Caco-2 (cell line): ENCODE measurements at regions of chr1 and their contacts with region 1.

Region 1: DNA sequence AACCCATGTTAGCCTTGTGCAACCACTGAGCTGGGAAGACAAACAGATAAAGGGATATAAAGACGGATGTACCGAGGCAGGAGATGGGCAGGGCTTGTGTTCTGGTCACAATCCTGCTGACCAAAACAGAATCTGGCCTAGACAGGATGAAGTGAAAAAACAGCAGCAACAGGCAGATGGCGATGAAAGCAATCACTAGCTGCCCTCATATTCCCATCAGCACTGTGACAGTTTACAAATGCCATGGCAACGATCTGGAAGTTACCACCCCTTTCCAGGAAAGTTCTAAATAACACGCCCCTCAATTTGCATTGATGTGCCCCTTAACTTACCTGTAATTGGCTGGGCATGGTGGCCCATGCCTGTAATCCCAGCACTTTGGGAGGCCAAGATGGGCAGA is 40.6 kb upstream of the CD46 start:
- DNase-seq: peak; percentile 53 to 61
- H3K4me3 ChIP-seq: no peak overlapping the region
- H3K4me3 Mint-ChIP-seq: no peak overlapping the region
- H3K27ac Mint-ChIP-seq: no peak overlapping the region
- H3K4me1 ChIP-seq: no peaks in the 10 kb centered on the region
- H3K4me1 Mint-ChIP-seq: no peaks in the 10 kb centered on the region
- H3K27me3 ChIP-seq: no peaks in the 10 kb centered on the region
- H3K27me3 Mint-ChIP-seq: no peaks in the 10 kb centered on the region
- CTCF ChIP-seq: peak in 1 of 2 experiments; percentile 25

Region 2: DNA sequence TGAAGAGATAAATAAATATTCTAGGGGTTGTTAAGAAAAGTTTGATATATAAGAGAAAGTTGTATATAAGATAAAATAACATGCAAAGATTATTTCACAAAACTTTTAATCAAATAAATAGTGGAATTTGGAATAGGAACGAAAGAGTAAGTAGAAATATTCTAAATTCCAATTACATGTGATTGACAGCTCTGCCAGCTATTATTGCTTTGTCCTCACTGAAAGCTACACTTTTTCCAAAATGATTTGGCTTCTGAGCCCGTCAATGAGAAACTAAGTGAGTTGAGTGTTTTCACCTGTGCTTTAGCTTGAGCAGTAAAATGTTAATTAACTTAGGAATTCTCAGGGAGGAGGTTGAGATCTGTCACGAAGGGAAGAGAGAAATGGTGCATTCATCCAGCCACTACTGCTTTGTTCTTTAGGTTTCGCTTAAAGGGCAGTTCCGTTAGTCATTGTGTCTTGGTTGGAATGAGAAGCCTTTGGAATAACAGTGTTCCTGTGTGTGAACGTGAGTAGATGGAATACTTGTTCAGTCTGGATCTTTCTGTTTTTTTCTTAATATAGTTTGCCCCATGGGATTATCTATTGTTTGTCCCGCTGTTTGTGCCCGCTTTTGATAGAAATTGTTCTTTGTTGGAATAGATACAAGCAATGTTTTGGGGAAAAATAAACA is 129.7 kb before region 1 on chr1:
- CTCF ChIA-PET with region 1: no interaction called
- POLR2A ChIA-PET with region 1: no interaction called
- intact Hi-C with region 1: no loop called
- DNase-seq: no peak
- H3K4me3 ChIP-seq: no peak overlapping the region
- H3K4me3 Mint-ChIP-seq: no peak overlapping the region
- H3K27ac Mint-ChIP-seq: no peak overlapping the region
- H3K4me1 ChIP-seq: no peaks in the 10 kb centered on the region
- H3K4me1 Mint-ChIP-seq: no peaks in the 10 kb centered on the region
- H3K27me3 ChIP-seq: no peaks in the 10 kb centered on the region
- H3K27me3 Mint-ChIP-seq: peaks cover 10% of the 10 kb centered on the region
- CTCF ChIP-seq: no peak

Region 3: DNA sequence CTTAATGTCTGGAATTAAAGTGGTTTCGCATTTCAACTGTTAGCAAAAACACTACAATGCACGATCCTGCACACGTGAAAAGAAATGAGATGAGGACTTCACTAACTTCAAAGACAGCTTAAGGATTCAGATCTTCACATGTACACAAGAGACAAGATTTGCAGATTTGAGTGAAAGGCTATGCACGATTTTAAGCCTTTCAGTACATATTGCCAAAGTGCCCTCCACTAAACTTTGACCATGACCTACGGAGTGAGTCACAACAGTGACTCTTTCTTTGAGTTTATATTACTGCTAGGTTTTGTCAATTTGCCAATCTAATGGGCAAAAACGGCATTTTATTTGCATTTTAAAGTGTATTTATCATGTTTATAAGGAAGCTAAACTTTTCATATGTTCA is 107.5 kb before region 1 on chr1:
- CTCF ChIA-PET with region 1: no interaction called
- POLR2A ChIA-PET with region 1: no interaction called
- intact Hi-C with region 1: no loop called
- DNase-seq: peak in 1 of 2 experiments; percentile 21
- H3K4me3 ChIP-seq: no peak overlapping the region
- H3K4me3 Mint-ChIP-seq: no peak overlapping the region
- H3K27ac Mint-ChIP-seq: no peak overlapping the region
- H3K4me1 ChIP-seq: 0 out of 2 replicates have a peak, but pooled peaks cover 4% of the 10 kb centered on the region
- H3K4me1 Mint-ChIP-seq: no peaks in the 10 kb centered on the region
- H3K27me3 ChIP-seq: no peaks in the 10 kb centered on the region
- H3K27me3 Mint-ChIP-seq: peaks cover 15% of the 10 kb centered on the region
- CTCF ChIP-seq: no peak

Region 4: GRCh38 chr1:207751790-207752455 is 40.6 kb after region 1 on chr1 and contains the start of gene CD46:
- CTCF ChIA-PET with region 1: no interaction called
- POLR2A ChIA-PET with region 1: no interaction called
- intact Hi-C with region 1: loop called (anchors 1 kb)
- DNase-seq: peak; percentile 98 to 99
- H3K4me3 ChIP-seq: peak within 1 kb of the TSS; percentile 90
- H3K4me3 Mint-ChIP-seq: peak within 1 kb of the TSS; percentile 93
- H3K27ac Mint-ChIP-seq: peak within 1 kb of the TSS; percentile 95
- H3K4me1 ChIP-seq: peaks cover 70% of the 10 kb centered on the region
- H3K4me1 Mint-ChIP-seq: peaks cover 48% of the 10 kb centered on the region
- H3K27me3 ChIP-seq: no peaks in the 10 kb centered on the region
- H3K27me3 Mint-ChIP-seq: no peaks in the 10 kb centered on the region
- CTCF ChIP-seq: no peak
- total RNA-seq, gene CD46: 152 and 166 TPM in 2 replicates